ENCODE measurements at regions of chr14 and their contacts with region 1.

Region 1: DNA sequence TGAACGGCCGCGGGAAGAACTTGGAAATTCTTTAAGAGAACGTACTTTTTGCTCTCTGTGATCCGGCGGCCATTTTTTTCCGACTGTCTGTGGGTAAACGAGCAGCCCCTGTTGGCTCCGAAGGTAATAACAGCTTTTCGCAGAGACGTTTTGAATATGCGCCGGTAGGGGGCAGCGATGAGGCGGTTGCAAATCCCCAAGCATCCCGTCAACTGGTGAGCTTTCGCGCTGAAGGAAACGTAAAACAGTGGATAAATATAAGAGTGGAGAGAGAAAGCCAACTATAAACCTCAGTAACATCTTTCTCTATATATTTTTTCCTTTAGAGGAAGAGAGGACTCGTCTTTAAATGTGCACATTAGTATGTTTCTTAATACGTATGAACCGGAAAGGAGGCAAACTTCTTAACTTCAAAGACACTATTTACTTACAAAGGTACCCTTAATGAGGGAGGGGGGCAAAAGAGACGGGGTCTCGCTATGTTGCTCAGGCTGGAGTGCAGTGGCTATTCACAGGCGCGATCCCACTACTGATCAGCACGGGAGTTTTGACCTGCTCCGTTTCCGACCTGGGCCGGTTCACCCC is 9.6 kb upstream of the NEMF start:
- DNase-seq: peak; percentile 78 to 93 (median 85)
- ATAC-seq: peak; percentile 32
- H3K4me3 ChIP-seq: peak overlapping the region; percentile 66 to 80
- H3K4me3 Mint-ChIP-seq: no peak overlapping the region
- H3K27ac ChIP-seq: peak overlapping the region; percentile 97 to 98
- H3K27ac Mint-ChIP-seq: no peak overlapping the region
- H3K4me1 ChIP-seq: peaks cover 28% of the 10 kb centered on the region
- H3K4me1 Mint-ChIP-seq: peaks cover 7% of the 10 kb centered on the region
- H3K27me3 ChIP-seq: no peaks in the 10 kb centered on the region
- H3K27me3 Mint-ChIP-seq: no peaks in the 10 kb centered on the region
- CTCF ChIP-seq: peak; percentile 100

Region 2: GRCh38 chr14:49585803-49586672 is 276.1 kb before region 1 on chr14 and contains the start of gene RPS29:
- CTCF ChIA-PET with region 1: no interaction called
- POLR2A ChIA-PET with region 1: interaction called, 12 read pairs
- intact Hi-C with region 1: loop called in 1 of 2 experiments (anchors 1 kb)
- DNase-seq: peak; percentile 97 to 100 (median 98)
- ATAC-seq: peak; percentile 82
- H3K4me3 ChIP-seq: peak within 1 kb of the TSS; percentile 81 to 98
- H3K4me3 Mint-ChIP-seq: peak within 1 kb of the TSS; percentile 91
- H3K27ac ChIP-seq: peak within 1 kb of the TSS; percentile 97 to 98
- H3K27ac Mint-ChIP-seq: peak within 1 kb of the TSS; percentile 98
- H3K4me1 ChIP-seq: peaks cover 33% of the 10 kb centered on the region
- H3K4me1 Mint-ChIP-seq: peaks cover 48% of the 10 kb centered on the region
- H3K27me3 ChIP-seq: no peaks in the 10 kb centered on the region
- H3K27me3 Mint-ChIP-seq: no peaks in the 10 kb centered on the region
- CTCF ChIP-seq: no peak
- total RNA-seq, gene RPS29: 3,843 to 3,876 TPM

Region 3: DNA sequence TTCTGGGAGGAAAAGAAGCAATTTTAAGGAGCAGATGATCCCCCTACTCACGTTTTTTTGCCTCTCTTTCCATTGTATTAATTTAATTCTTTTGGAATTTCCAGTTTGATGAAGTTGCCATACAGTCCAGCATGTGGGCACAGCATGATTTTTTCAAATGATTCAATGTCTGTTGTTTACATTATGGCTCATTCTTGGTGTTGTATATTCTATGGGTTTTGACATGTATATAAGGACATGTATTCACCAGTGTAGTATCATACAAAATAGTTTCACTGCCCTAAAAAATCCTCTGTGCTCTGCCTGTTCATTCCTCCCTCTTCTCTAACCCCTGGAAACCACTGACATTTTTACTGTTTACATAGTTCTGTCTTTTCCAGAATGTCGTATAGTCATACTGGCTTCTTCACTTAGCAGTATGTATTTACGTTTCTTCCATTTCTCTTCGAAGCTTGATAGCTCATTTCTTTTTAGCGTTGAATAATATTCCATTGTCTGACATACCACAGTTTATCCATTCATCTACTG is 107.5 kb before region 1 on chr14:
- CTCF ChIA-PET with region 1: no interaction called
- POLR2A ChIA-PET with region 1: no interaction called
- intact Hi-C with region 1: no loop called
- DNase-seq: no peak
- ATAC-seq: no peak
- H3K4me3 ChIP-seq: no peak overlapping the region
- H3K4me3 Mint-ChIP-seq: no peak overlapping the region
- H3K27ac ChIP-seq: no peak overlapping the region
- H3K27ac Mint-ChIP-seq: no peak overlapping the region
- H3K4me1 ChIP-seq: no peaks in the 10 kb centered on the region
- H3K4me1 Mint-ChIP-seq: no peaks in the 10 kb centered on the region
- H3K27me3 ChIP-seq: no peaks in the 10 kb centered on the region
- H3K27me3 Mint-ChIP-seq: no peaks in the 10 kb centered on the region
- CTCF ChIP-seq: no peak

Region 4: GRCh38 chr14:49767562-49768300 is 94.5 kb before region 1 on chr14 and contains the start of gene KLHDC2:
- CTCF ChIA-PET with region 1: interaction called, 7 read pairs
- POLR2A ChIA-PET with region 1: interaction called, 36 read pairs
- intact Hi-C with region 1: no loop called
- DNase-seq: peak; percentile 74 to 94 (median 87)
- ATAC-seq: peak; percentile 65
- H3K4me3 ChIP-seq: peak within 1 kb of the TSS; percentile 79 to 99
- H3K4me3 Mint-ChIP-seq: peak within 1 kb of the TSS; percentile 98
- H3K27ac ChIP-seq: peak within 1 kb of the TSS; percentile 94 to 97
- H3K27ac Mint-ChIP-seq: peak within 1 kb of the TSS; percentile 100
- H3K4me1 ChIP-seq: peaks cover 29% of the 10 kb centered on the region
- H3K4me1 Mint-ChIP-seq: peaks cover 38% of the 10 kb centered on the region
- H3K27me3 ChIP-seq: no peaks in the 10 kb centered on the region
- H3K27me3 Mint-ChIP-seq: no peaks in the 10 kb centered on the region
- CTCF ChIP-seq: peak; percentile 22
- total RNA-seq, gene KLHDC2: 121 to 122 TPM

Region 5: GRCh38 chr14:49892636-49893308 is 30.6 kb after region 1 on chr14 and contains the start of gene ARF6:
- CTCF ChIA-PET with region 1: interaction called, 33 read pairs
- POLR2A ChIA-PET with region 1: interaction called, 33 read pairs
- intact Hi-C with region 1: loop called in 1 of 2 experiments (anchors 1 kb)
- DNase-seq: peak; percentile 90 to 98 (median 97)
- ATAC-seq: peak; percentile 76
- H3K4me3 ChIP-seq: peak within 1 kb of the TSS; percentile 87 to 92
- H3K4me3 Mint-ChIP-seq: peak within 1 kb of the TSS; percentile 97
- H3K27ac ChIP-seq: peak within 1 kb of the TSS; percentile 98 to 99
- H3K27ac Mint-ChIP-seq: peak within 1 kb of the TSS; percentile 98
- H3K4me1 ChIP-seq: peaks cover 27% of the 10 kb centered on the region
- H3K4me1 Mint-ChIP-seq: peaks cover 30% of the 10 kb centered on the region
- H3K27me3 ChIP-seq: no peaks in the 10 kb centered on the region
- H3K27me3 Mint-ChIP-seq: no peaks in the 10 kb centered on the region
- CTCF ChIP-seq: no peak
- total RNA-seq, gene ARF6: 60.9 to 62.5 TPM

Region 6: DNA sequence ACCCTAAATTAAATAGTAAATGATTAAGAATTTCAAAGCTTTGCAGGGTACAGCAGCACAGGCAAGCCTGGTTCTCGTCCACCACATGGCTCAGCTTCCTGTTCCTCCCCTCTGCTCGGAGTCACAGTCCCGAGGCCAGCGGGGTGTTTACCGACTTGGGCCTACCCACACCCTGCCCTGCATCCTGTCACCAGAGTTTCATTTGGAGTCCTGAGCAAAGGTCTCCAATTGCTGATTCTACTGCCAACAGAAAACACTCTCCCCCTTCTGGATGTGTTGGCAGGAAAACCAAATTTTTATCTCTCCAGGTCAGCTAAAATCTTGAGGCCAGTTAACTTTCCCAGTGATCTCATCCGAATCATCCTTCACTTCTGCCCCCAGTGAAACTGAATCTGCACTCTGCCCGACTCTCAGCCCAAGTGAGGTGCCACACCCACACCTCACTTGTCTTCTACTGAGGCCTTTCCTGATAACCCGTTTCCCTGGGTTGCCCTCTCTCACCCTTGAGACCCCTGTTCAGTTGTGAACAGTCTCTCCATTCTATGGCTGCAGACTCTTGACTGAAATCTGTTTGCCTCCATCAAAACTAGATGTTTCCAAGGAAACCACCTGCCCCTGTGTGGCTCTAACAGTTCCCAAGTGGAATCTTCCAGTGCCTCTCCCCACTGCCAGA is 183.0 kb after region 1 on chr14:
- CTCF ChIA-PET with region 1: interaction called, 10 read pairs
- POLR2A ChIA-PET with region 1: interaction called, 12 read pairs
- intact Hi-C with region 1: loop called in 1 of 2 experiments (anchors 2 kb)
- DNase-seq: peak; percentile 27 to 86 (median 72)
- ATAC-seq: peak; percentile 77
- H3K4me3 ChIP-seq: peak overlapping the region in 1 of 2 experiments; percentile 17
- H3K4me3 Mint-ChIP-seq: peak overlapping the region; percentile 56
- H3K27ac ChIP-seq: peak overlapping the region; percentile 63 to 89
- H3K27ac Mint-ChIP-seq: peak overlapping the region; percentile 91
- H3K4me1 ChIP-seq: peaks cover 62% of the 10 kb centered on the region
- H3K4me1 Mint-ChIP-seq: peaks cover 65% of the 10 kb centered on the region
- H3K27me3 ChIP-seq: no peaks in the 10 kb centered on the region
- H3K27me3 Mint-ChIP-seq: no peaks in the 10 kb centered on the region
- CTCF ChIP-seq: no peak

Region 7: DNA sequence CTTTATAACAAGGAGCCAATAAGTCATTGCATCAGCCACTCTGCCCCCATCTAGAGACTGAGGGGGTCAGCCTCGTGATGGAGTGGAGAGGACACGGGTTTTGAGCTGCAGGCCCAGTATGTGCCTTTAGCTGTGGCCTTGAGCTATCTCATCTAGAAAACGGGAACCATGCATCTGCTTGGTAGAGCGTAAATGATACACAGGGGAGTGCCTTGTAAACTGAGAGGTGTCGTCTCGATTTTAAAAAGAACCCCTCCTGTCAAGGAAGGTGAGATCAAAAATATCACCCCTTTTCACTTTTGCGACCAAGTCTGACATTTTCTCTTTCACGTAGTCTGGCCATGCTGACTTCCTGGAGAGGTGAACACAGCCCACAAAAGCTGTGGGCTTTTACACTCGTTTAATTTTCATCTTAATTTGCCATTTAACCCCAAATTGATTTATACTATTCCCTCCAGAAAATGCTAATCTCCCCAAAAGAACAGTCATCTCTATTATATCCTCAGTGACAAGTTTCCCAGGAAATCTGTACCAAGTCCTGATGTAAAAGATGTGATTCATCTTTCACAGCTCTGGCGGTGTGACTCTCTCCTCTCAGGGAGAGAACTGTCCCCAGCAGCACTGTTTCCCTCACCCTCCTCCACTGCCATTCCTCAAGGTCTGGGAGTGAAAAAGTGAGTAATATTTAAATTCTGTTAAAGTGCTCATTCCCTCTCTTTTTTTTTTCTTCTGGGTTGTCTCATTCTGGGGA is 223.6 kb after region 1 on chr14:
- CTCF ChIA-PET with region 1: interaction called, 16 read pairs
- POLR2A ChIA-PET with region 1: interaction called, 19 read pairs
- intact Hi-C with region 1: loop called in 1 of 2 experiments (anchors 2 kb)
- DNase-seq: peak in 3 of 9 experiments; percentile 28 to 81 (median 65)
- ATAC-seq: peak; percentile 2
- H3K4me3 ChIP-seq: peak overlapping the region in 1 of 2 experiments; percentile 16
- H3K4me3 Mint-ChIP-seq: peak overlapping the region; percentile 66
- H3K27ac ChIP-seq: peak overlapping the region; percentile 50 to 98
- H3K27ac Mint-ChIP-seq: peak overlapping the region; percentile 92
- H3K4me1 ChIP-seq: peaks cover 86% of the 10 kb centered on the region
- H3K4me1 Mint-ChIP-seq: peaks cover 94% of the 10 kb centered on the region
- H3K27me3 ChIP-seq: no peaks in the 10 kb centered on the region
- H3K27me3 Mint-ChIP-seq: no peaks in the 10 kb centered on the region
- CTCF ChIP-seq: no peak

Region 8: GRCh38 chr14:50116181-50116956 is 254.2 kb after region 1 on chr14 and contains the start of gene VCPKMT:
- CTCF ChIA-PET with region 1: interaction called, 24 read pairs
- POLR2A ChIA-PET with region 1: interaction called, 25 read pairs
- intact Hi-C with region 1: loop called in 1 of 2 experiments (anchors 1 kb)
- DNase-seq: peak; percentile 91 to 98 (median 96)
- ATAC-seq: peak; percentile 97
- H3K4me3 ChIP-seq: peak within 1 kb of the TSS; percentile 69 to 92
- H3K4me3 Mint-ChIP-seq: peak within 1 kb of the TSS; percentile 98
- H3K27ac ChIP-seq: peak within 1 kb of the TSS; percentile 85 to 86
- H3K27ac Mint-ChIP-seq: peak within 1 kb of the TSS; percentile 99
- H3K4me1 ChIP-seq: peaks cover 20% of the 10 kb centered on the region
- H3K4me1 Mint-ChIP-seq: peaks cover 28% of the 10 kb centered on the region
- H3K27me3 ChIP-seq: no peaks in the 10 kb centered on the region
- H3K27me3 Mint-ChIP-seq: no peaks in the 10 kb centered on the region
- CTCF ChIP-seq: no peak
- total RNA-seq, gene VCPKMT: 38.2 to 39.6 TPM